ENCODE measurements at regions of chr19 and their contacts with region 1.

Region 1: DNA sequence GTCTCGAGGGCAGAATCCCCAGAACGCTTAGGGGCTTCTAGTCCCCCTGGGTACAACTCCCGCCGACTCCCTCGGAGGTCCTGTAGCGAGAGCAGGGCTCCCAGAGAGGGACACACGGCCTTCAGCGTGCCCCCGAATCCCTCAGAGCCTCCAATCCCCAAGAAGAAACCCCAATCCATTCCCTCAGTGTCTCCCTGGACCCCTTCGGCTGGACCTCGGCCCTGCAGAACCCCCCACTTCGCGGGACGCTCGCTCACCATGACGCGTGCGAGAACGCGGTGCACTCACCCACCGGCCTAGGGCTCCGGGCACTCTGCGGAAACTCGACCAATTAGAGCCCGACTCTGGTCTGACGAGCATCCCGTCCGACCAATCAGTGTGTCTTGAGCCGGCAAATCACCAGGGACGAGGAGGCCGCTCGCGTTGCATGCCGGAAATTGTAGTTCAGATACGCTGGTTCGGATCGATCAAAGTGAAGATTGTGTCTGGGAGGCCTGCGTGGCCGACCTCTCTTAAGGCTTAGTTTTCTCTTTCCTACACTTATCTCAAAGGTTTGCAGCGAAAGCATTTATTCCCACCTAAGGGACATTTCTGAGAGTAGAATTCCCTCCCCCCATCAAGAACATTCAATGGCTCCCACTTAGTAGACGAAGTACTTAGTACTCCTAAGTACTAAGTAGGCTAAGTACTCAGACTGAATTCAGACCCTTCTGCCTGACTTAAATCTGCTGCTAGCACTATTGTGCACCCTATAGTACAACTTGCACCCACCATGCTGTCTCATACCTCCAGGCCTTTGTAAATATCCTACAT is at the start of gene TMEM161A:
- DNase-seq: peak; percentile 98
- ATAC-seq: peak; percentile 97
- total RNA-seq, gene TMEM161A: 23.5 TPM

Region 2: GRCh38 chr19:19032420-19033175 is 105.8 kb before region 1 on chr19:
- intact Hi-C with region 1: no loop called
- DNase-seq: peak; percentile 88
- ATAC-seq: peak; percentile 76

Region 3: GRCh38 chr19:19053508-19054314 is 84.7 kb before region 1 on chr19:
- intact Hi-C with region 1: loop called (anchors 1 kb)
- DNase-seq: no peak
- ATAC-seq: peak; percentile 64

Region 4: DNA sequence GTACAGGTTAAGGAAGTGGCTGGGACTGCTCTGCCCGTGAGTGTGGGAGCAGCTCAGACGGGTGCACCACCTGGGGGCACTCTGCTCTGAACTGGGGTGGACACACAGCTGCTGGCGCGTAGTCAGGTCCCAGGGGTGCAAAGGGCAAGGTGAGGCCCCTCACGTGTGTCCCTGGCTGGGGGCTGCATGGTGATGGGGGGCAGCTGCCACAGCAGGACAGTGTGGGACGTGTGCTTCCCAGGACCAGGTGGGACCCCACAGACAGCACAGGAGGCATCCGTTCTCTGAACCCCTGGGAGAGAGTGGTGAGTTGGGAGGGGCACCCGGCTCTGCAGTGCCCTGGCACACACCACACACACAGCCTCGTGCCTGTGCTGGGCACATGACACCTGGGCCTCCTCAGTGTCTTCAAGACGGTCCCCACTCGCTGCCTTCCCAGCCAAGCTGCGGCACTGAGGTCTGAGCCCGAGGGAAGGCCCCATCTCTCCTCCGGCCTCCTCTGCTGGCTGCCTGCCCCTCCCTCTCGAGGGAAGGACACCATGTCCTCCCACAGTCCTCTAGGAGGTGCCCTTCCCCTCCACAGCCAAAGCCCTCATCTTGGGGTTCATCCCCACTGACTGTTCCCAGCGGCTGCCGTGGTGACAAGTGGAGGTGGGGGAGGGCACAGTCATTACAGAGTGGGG is 424.4 kb after region 1 on chr19:
- intact Hi-C with region 1: no loop called
- DNase-seq: no peak
- ATAC-seq: peak; percentile 16

Measured in Right ventricle myocardium inferior (tissue), 1 donor.